HCT116 (cell line): ENCODE measurements at regions of chr12 and their contacts with region 1.

Region 1: DNA sequence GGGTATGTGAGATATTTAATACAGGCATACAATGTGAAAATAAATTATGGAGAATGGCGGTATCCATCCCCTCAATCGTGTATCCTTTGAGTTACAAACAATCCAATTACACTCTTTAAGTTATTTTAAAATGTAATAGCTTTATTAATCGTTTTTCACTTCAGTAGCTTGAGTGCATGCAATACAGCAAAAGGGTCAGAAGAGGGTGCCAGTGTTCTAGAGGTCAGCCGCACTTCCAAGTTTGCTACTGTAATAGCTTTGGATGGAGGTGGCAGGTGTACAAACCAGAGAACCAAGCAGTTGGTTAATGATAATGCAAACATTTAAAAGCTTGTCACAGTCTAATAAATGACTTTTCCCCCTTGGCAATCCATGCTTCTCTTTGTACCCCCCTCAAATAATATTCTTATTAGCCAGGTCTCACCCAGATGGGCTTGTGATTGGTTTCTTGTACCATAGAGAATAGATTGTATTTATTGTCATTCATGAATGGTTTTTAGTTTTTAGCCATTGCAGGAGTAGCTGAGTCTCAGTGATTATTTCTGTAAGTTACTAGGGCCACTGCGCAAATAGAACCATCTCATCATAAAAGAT is 127.0 kb downstream of the ERC1 start:
- DNase-seq: peak; percentile 59
- ATAC-seq: peak; percentile 59
- H3K4me3 ChIP-seq: no peak overlapping the region
- H3K27ac ChIP-seq: no peak overlapping the region
- H3K4me1 ChIP-seq: peaks cover 17 to 23% of the 10 kb centered on the region in 2 experiments
- H3K27me3 ChIP-seq: no peaks in the 10 kb centered on the region
- CTCF ChIP-seq: peak; percentile 71 to 94 (median 81)
- POLR2A ChIP-seq: no peak
- RAD21 ChIP-seq: peak; percentile 92

Region 2: GRCh38 chr12:1130164-1130563 is 12.1 kb after region 1 on chr12:
- CTCF ChIA-PET with region 1: interaction called, 40 read pairs
- POLR2A ChIA-PET with region 1: interaction called, 3 read pairs
- RAD21 ChIA-PET with region 1: interaction called in 1 of 2 experiments, 3 read pairs
- intact Hi-C with region 1: no loop called
- DNase-seq: peak; percentile 78
- ATAC-seq: peak; percentile 92
- H3K4me3 ChIP-seq: peak overlapping the region in 1 of 2 experiments; percentile 3; a peak in 1 of 4 replicates
- H3K27ac ChIP-seq: peak overlapping the region; percentile 51
- H3K4me1 ChIP-seq: peaks cover 27 to 31% of the 10 kb centered on the region in 2 experiments
- H3K27me3 ChIP-seq: no peaks in the 10 kb centered on the region
- CTCF ChIP-seq: no peak
- POLR2A ChIP-seq: no peak
- RAD21 ChIP-seq: peak; percentile 16; the same call in 1 of the 2 replicates

Region 3: GRCh38 chr12:1197264-1198018 is 79.4 kb after region 1 on chr12:
- CTCF ChIA-PET with region 1: no interaction called
- POLR2A ChIA-PET with region 1: no interaction called
- RAD21 ChIA-PET with region 1: no interaction called
- intact Hi-C with region 1: no loop called
- DNase-seq: no peak
- ATAC-seq: no peak
- H3K4me3 ChIP-seq: no peak overlapping the region
- H3K27ac ChIP-seq: no peak overlapping the region
- H3K4me1 ChIP-seq: no peaks in the 10 kb centered on the region
- H3K27me3 ChIP-seq: no peaks in the 10 kb centered on the region
- CTCF ChIP-seq: no peak
- POLR2A ChIP-seq: no peak
- RAD21 ChIP-seq: no peak

Region 4: DNA sequence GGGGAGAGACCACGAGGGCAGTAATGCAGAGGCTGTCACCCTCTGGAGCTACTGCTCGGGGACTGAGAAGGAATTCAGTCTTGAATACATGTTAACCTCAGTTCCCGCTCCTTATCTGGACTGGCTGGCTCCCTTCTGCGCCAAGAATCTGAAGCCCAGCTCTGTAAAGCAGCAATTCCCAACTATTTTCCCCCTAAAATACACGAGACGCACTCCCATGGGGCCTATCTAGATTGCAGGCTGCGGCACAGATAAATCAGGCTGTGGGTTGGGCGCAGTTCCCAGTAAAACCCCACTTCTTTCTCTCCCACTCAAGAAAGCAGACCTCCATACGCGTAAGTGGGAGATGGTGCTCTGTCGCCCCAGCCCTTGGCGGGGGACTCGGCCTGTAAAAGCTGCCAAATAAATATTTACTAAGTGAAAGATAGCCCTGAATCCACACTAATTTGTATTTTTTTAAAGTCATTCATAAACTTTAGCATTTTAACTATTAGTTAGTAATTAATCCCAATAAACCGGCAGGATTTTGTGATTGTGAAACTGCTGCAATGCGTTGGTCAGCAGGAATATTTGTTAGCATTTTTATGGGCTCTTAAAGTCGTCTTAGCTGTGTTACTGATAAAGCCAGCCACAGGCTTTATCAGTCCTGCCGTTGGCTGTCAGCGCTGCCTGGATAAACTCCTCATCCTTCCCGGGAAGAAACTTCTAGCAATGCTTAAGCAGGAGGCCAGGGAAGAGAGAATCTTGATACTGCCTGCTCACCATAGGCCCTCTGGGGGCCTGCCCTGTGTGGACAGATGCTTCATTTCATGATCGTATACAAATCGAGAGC is 458.6 kb after region 1 on chr12:
- CTCF ChIA-PET with region 1: interaction called, 180 read pairs
- POLR2A ChIA-PET with region 1: no interaction called
- RAD21 ChIA-PET with region 1: interaction called, 3 to 20 read pairs
- intact Hi-C with region 1: no loop called
- DNase-seq: no peak
- ATAC-seq: no peak
- H3K4me3 ChIP-seq: no peak overlapping the region
- H3K27ac ChIP-seq: no peak overlapping the region
- H3K4me1 ChIP-seq: no peaks in the 10 kb centered on the region; a peak in 1 of 4 replicates
- H3K27me3 ChIP-seq: no peaks in the 10 kb centered on the region
- CTCF ChIP-seq: no peak
- POLR2A ChIP-seq: no peak
- RAD21 ChIP-seq: no peak

Region 5: DNA sequence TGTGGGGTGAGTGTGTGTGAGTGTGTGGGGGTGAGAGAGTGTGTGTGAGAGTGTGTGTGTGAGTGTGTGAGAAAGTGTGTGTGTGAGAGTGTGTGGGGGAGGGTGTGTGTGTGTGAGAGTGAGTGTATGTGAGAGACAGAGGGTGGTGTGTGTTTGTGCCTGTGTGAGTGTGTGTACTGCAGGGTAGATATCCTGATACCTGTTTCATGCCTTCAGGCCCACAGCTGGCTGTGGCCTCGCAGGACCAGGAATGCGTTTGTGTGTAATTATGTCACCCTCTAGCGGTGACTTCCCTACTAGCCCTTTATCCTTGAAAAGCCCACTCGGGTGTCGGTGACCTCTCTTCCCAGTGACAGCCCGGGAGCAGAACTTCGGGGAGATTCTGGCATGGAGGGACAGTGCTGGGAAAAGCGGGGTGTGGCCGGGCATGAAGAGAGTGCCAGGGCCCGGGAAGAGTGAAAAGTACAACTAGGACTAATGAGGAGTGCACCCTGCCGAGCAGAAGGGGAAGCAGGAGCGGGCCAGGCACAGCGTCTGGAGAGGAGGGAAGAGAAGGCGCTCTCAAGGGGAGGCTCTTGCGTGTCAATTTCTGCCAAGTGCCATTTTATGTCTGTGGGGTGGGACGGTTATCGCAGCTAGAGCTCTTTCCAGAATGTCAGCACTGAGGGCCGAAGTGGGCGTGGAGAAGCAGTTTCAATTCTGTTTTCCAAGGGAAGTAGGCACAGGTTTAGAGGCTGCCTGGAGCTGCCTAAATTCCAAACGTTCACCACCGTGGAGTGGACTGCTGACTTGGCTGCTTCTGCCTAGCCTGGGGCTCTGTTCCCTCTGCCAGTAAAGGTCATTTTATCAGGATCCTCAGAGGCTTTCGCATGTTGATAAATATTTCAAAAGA is 487.3 kb after region 1 on chr12:
- CTCF ChIA-PET with region 1: interaction called, 22 read pairs
- POLR2A ChIA-PET with region 1: no interaction called
- RAD21 ChIA-PET with region 1: interaction called, 7 read pairs
- intact Hi-C with region 1: no loop called
- DNase-seq: peak; percentile 78
- ATAC-seq: peak; percentile 84
- H3K4me3 ChIP-seq: peak overlapping the region; percentile 41 to 60
- H3K27ac ChIP-seq: peak overlapping the region; percentile 69
- H3K4me1 ChIP-seq: peaks cover 8 to 22% of the 10 kb centered on the region in 2 experiments
- H3K27me3 ChIP-seq: no peaks in the 10 kb centered on the region
- CTCF ChIP-seq: peak; percentile 77 to 80 (median 79)
- POLR2A ChIP-seq: no peak
- RAD21 ChIP-seq: peak; percentile 88